HEK293 (cell line): ENCODE measurements at regions of chr10 and their contacts with region 1.

Region 1: DNA sequence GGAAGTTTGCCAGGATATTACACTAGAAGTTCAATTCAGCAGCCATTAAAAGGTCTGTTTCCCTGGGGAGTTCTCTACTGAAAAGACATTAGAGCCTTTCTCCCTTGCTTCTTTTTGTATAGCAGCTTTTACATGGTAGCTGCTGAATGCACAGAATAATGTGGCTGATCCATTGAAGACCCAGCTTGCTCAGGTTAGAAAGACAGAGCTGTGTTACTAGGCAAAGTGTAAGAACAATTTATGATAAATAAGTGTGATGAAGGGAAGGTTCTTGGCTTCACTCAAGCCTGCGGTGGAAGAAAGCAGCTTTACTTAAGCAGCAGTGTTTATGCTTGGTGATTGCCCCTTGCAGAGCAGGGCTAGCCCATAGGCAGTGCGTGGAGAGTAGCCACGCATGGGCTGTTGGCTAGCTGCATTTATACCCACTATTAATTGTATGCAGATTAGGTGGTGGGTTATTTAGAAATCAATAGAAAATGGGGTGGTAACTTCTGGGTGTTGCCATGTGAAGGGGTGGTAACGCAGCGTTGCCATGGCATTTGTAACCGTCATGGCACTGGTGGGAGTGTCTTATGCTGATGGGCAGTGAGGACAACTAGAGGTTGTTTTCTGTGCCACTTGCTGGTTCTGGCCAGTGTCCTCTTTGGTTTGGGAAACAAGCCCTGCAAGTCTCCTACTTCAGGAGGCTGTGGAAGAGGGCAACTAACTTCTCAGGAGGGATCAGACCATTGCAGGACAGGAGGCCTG is 942.9 kb downstream of the NRG3 start:
- H3K4me3 ChIP-seq: no peak overlapping the region
- H3K27ac ChIP-seq: no peak overlapping the region
- H3K4me1 ChIP-seq: no peaks in the 10 kb centered on the region
- CTCF ChIP-seq: no peak

Region 2: DNA sequence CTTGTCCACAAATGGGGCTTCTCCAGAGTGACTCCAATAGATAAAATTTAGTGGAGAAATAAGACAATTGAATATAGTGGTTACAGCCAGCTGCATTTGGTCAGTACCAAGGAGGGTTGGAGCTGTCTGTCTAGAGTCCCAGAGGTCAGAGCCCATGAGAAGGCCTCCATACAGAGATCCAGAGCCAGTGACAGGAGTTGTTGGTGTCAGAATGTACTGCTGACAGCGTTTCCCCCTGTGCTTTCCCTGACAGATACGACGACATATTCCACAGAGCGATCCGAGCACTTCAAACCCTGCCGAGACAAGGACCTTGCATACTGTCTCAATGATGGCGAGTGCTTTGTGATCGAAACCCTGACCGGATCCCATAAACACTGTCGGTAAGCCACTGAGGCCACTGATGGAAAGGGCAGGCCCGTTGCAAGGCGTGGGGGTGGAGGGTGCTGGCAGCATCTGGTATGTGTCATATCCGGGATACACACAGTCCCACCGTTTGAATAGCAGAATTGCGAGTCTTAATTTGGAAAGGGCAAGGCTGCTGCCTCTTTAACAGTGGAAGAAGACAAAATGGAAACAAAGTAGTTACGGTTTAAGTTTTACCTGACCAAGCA is 459.3 kb before region 1 on chr10:
- CTCF ChIA-PET with region 1: no interaction called
- POLR2A ChIA-PET with region 1: interaction called, 10 read pairs
- H3K4me3 ChIP-seq: no peak overlapping the region
- H3K27ac ChIP-seq: no peak overlapping the region
- H3K4me1 ChIP-seq: no peaks in the 10 kb centered on the region
- CTCF ChIP-seq: no peak

Region 3: GRCh38 chr10:83050815-83051214 is 233.0 kb after region 1 on chr10:
- CTCF ChIA-PET with region 1: no interaction called
- POLR2A ChIA-PET with region 1: no interaction called
- H3K4me3 ChIP-seq: no peak overlapping the region
- H3K27ac ChIP-seq: no peak overlapping the region
- H3K4me1 ChIP-seq: no peaks in the 10 kb centered on the region
- CTCF ChIP-seq: no peak